ENCODE measurements at regions of chr2 and their contacts with region 1.

Region 1: DNA sequence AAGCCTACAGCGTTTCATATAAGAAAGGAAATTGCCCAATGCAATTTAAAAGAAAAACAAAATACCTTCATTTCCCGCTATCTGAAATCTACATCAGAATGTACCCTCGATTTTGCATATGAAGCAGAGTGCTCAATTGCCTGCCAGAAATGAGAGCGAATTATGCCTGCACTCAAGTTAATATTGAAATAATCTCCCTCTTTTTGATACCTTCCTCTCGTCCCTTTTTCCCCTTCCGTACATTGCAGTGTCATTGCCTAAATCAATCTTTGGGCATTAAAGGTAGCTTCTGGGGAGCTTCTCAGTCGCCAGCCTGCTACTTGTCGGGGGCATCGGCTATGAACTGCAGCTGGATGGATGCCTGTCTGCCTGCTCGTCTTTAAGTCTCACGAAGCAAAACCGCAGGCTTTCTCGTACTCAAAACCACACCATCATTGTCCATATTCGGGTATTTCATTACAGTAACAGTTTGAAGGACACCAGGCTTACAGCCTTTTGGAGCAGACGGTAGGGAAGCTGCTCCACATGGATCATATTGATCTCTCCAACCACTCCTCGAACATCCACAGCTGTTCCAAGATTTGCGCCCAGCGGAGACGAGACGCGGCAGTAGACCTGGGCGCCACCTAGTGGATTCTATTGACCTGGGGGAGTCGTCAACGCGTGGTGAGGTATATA is 64.0 kb upstream of the HNRNPA3 start:
- DNase-seq: peak; percentile 85
- H3K4me3 ChIP-seq: peak overlapping the region in 2 of 3 experiments; percentile 29 to 62
- H3K27ac ChIP-seq: no peak overlapping the region
- H3K4me1 ChIP-seq: peaks cover 10% of the 10 kb centered on the region
- H3K27me3 ChIP-seq: peaks cover 9% of the 10 kb centered on the region in 2 experiments
- CTCF ChIP-seq: peak; percentile 87 to 89
- POLR2A ChIP-seq: no peak

Region 2: GRCh38 chr2:176110975-176111663 is 1037.5 kb before region 1 on chr2:
- CTCF ChIA-PET with region 1: interaction called, 23 read pairs
- POLR2A ChIA-PET with region 1: no interaction called
- dilution Hi-C with region 1: no loop called
- intact Hi-C with region 1: no loop called
- DNase-seq: peak; percentile 74
- H3K4me3 ChIP-seq: no peak overlapping the region
- H3K27ac ChIP-seq: no peak overlapping the region
- H3K4me1 ChIP-seq: no peaks in the 10 kb centered on the region
- H3K27me3 ChIP-seq: peaks cover 81 to 96% of the 10 kb centered on the region in 2 experiments
- CTCF ChIP-seq: peak; percentile 87 to 93
- POLR2A ChIP-seq: no peak

Region 3: DNA sequence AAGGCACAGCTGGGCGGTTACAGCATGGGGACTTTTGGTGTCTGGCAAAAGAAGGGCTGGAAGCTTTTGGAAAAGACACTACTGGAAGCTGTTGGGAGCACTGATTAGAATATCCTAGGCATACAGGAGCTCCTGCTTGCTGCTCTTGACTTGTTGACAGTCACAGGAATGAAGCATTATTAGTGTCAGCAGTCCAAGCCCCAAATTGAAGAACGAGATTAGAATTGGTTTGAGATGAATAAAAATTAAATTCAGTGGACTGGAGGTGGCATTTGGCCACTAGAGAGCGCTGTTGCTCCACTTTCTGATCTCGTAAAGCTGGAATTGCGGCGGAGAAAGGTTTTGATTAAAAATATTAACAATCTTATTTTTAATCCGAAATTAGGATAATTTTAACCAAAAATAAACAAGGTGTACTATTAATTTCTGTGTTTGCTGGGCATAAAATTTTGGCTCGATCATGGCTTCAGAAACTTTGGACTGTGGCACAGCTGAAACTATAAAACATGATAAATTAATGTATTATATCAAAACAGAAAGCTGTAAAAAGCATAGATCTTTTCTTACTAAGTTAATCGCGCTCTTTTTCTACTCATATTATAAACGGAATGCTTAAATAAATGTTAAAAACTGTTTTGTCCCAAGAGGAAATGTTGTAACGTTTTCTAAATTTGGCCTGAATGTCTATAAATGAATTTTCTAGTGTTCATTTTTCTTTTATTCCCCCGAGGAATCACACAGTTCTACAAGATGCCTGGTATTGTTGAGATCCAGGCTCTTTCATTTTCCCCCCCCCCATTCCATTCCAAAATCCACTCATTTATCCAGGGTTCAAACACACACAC is 1021.5 kb before region 1 on chr2:
- CTCF ChIA-PET with region 1: interaction called, 78 read pairs
- POLR2A ChIA-PET with region 1: no interaction called
- dilution Hi-C with region 1: no loop called
- intact Hi-C with region 1: loop called (anchors 1 kb)
- DNase-seq: peak; percentile 68
- H3K4me3 ChIP-seq: peak overlapping the region in 2 of 3 experiments; percentile 48 to 67
- H3K27ac ChIP-seq: no peak overlapping the region
- H3K4me1 ChIP-seq: peaks cover 33% of the 10 kb centered on the region
- H3K27me3 ChIP-seq: peaks cover 5 to 6% of the 10 kb centered on the region in 2 experiments
- CTCF ChIP-seq: peak; percentile 61 to 66
- POLR2A ChIP-seq: no peak

Region 4: DNA sequence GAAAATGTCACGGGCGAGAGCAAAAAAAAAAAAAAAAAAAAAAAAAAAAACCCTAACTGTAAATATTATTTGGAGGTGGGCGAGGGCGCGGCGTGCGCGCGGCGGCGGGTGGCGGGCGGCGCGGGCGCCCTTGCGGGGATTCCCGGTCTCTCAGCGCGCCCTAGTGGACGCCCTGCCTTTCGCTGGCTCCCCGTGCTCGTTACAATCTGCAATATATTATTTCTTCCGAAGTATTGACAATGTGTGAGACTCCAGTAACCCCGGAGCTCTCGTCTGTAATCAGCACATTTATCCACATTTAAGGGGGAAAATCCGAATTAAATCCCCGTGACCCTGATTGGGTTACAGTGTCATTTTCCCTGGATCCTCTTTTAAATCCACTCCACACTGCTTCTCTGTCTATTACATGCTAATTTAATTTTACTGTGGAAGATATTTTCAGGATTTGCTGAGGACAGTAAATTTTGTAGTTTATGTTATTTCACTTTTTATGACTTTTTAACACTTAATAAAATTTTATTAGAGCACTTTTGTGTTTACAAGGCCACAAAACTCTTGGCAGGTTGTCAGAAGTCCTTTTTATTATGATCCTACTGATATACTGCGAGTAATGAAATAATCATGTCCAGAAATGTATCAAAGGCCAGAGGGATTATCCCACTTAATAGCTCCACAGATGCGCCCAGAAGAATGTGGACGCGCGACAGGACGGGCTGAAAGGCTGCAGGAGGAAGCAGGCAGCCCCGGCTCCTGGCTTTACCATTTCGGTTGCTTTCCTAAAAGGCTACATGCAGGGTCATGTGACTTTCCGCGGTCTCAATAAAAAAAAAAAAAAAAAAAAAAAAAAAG is 510.2 kb before region 1 on chr2:
- CTCF ChIA-PET with region 1: interaction called, 9 read pairs
- POLR2A ChIA-PET with region 1: no interaction called
- dilution Hi-C with region 1: no loop called
- intact Hi-C with region 1: loop called (anchors 1 kb)
- DNase-seq: peak; percentile 74
- H3K4me3 ChIP-seq: peak overlapping the region; percentile 9 to 59 (median 55)
- H3K27ac ChIP-seq: peak overlapping the region; percentile 79
- H3K4me1 ChIP-seq: peaks cover 25% of the 10 kb centered on the region
- H3K27me3 ChIP-seq: no peaks in the 10 kb centered on the region
- CTCF ChIP-seq: peak; percentile 63 to 83
- POLR2A ChIP-seq: no peak

Region 5: GRCh38 chr2:176814306-176815052 is 334.1 kb before region 1 on chr2:
- CTCF ChIA-PET with region 1: interaction called, 27 read pairs
- POLR2A ChIA-PET with region 1: no interaction called
- dilution Hi-C with region 1: no loop called
- intact Hi-C with region 1: loop called (anchors 1 kb)
- DNase-seq: peak; percentile 38
- H3K4me3 ChIP-seq: no peak overlapping the region
- H3K27ac ChIP-seq: no peak overlapping the region
- H3K4me1 ChIP-seq: no peaks in the 10 kb centered on the region
- H3K27me3 ChIP-seq: peaks cover 0 to 9% of the 10 kb centered on the region in 2 experiments
- CTCF ChIP-seq: peak; percentile 16 to 17
- POLR2A ChIP-seq: no peak

Region 6: GRCh38 chr2:176969642-176970359 is 178.8 kb before region 1 on chr2:
- CTCF ChIA-PET with region 1: interaction called, 5 read pairs
- POLR2A ChIA-PET with region 1: no interaction called
- dilution Hi-C with region 1: no loop called
- intact Hi-C with region 1: loop called (anchors 5 kb)
- DNase-seq: no peak
- H3K4me3 ChIP-seq: no peak overlapping the region
- H3K27ac ChIP-seq: no peak overlapping the region
- H3K4me1 ChIP-seq: no peaks in the 10 kb centered on the region
- H3K27me3 ChIP-seq: peaks cover 2 to 7% of the 10 kb centered on the region in 2 experiments
- CTCF ChIP-seq: no peak
- POLR2A ChIP-seq: no peak

Region 7: GRCh38 chr2:177088529-177088928 is 60.1 kb before region 1 on chr2:
- CTCF ChIA-PET with region 1: no interaction called
- POLR2A ChIA-PET with region 1: no interaction called
- dilution Hi-C with region 1: no loop called
- intact Hi-C with region 1: no loop called
- DNase-seq: peak; percentile 63
- H3K4me3 ChIP-seq: no peak overlapping the region
- H3K27ac ChIP-seq: no peak overlapping the region
- H3K4me1 ChIP-seq: peaks cover 11% of the 10 kb centered on the region
- H3K27me3 ChIP-seq: peaks cover 0 to 3% of the 10 kb centered on the region in 2 experiments
- CTCF ChIP-seq: no peak
- POLR2A ChIP-seq: no peak

Region 8: DNA sequence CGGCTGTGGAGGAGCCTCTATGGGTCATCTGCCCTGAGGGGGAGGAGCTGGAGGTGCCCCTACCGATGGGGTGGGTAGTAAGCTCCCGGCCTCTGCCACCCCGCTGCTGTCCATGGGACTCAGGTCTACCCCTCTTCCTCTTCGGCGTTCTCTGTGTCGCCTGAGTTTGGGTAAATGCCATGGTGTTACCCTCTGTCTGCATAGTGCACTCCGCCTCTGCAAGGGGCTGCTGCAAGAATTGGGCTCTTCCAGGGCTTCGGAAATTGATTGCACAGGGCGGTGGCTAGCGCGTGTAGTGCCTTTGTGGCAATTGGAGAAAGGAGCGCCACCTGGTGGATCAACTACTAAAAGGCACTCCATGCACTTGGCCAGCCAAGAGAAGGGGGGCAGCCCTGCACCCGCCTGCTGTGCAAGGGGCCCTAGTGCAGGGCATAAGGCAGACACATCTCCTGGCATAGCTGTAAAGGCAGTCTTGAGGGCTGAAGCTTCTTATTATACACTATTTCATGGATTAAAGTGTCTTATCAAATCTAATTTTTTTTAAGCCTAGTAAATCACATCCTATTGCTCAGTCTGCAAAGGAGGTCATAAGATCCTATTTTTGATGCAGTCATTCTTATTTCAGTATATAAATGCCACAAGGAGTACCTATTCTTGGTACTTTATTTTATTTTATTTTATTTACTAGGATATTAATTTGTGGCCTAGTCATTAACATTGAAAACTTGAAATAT is 615.1 kb after region 1 on chr2:
- CTCF ChIA-PET with region 1: interaction called, 16 read pairs
- POLR2A ChIA-PET with region 1: no interaction called
- dilution Hi-C with region 1: no loop called
- intact Hi-C with region 1: loop called (anchors 2 kb)
- DNase-seq: peak; percentile 70
- H3K4me3 ChIP-seq: no peak overlapping the region
- H3K27ac ChIP-seq: no peak overlapping the region
- H3K4me1 ChIP-seq: peaks cover under 1% of the 10 kb centered on the region
- H3K27me3 ChIP-seq: no peaks in the 10 kb centered on the region
- CTCF ChIP-seq: peak; percentile 82 to 90
- POLR2A ChIP-seq: no peak

Measured in endothelial cell of umbilical vein (primary cell).